ENCODE measurements at regions of chr2 and their contacts with region 1.

Region 1: GRCh38 chr2:75640621-75641121 is 5.9 kb upstream of the MRPL19 start:
- DNase-seq: peak; percentile 51
- CTCF ChIP-seq: peak; percentile 97

Region 2: DNA sequence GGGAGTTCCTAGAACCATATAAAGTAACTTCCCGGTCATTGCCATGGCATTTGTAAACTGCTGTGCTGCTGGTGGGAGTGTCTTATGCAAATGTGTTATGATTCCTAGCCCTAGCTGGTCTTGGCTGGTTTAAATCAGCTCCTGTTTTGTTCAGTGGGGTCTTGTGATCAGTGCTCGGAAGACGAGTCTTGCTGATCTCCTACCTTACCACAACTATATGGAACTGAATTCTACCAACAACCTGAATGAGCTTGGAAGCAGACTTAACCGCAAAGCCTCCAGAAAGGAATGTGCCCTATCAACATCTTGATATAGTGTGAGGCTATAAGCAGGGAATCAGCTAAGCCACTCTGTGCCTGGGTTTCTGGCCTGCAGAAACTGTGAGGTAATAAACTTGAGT is 648.7 kb before region 1 on chr2:
- CTCF ChIA-PET with region 1: no interaction called
- POLR2A ChIA-PET with region 1: no interaction called
- DNase-seq: no peak
- CTCF ChIP-seq: no peak

Region 3: DNA sequence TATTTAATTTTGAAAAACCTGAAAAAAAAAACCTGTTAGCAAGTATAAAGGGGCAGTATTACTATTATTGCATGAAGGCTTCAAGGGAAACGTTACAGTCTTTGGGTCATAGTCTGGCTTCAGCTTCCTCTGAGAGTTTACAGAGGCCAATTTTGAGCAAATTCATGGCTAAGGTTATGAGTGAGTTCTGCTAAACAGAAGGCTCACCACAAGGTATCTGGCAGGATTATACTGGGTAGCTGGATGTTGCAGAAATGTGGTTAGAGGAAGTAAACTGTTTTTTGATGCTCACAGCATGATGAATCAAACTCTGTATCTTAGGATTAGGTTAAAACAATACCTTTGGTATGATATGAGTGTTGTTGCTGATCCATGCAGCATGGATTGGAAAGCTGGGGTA is 15.2 kb after region 1 on chr2:
- CTCF ChIA-PET with region 1: interaction called, 11 read pairs
- POLR2A ChIA-PET with region 1: no interaction called
- DNase-seq: no peak
- CTCF ChIP-seq: no peak

Region 4: GRCh38 chr2:75667884-75668283 is 27.2 kb after region 1 on chr2:
- CTCF ChIA-PET with region 1: interaction called, 18 read pairs
- POLR2A ChIA-PET with region 1: interaction called, 3 read pairs
- DNase-seq: no peak
- CTCF ChIP-seq: no peak